Psoas muscle (tissue), 8 donors: ENCODE measurements at regions of chr9 and their contacts with region 1.

Region 1: DNA sequence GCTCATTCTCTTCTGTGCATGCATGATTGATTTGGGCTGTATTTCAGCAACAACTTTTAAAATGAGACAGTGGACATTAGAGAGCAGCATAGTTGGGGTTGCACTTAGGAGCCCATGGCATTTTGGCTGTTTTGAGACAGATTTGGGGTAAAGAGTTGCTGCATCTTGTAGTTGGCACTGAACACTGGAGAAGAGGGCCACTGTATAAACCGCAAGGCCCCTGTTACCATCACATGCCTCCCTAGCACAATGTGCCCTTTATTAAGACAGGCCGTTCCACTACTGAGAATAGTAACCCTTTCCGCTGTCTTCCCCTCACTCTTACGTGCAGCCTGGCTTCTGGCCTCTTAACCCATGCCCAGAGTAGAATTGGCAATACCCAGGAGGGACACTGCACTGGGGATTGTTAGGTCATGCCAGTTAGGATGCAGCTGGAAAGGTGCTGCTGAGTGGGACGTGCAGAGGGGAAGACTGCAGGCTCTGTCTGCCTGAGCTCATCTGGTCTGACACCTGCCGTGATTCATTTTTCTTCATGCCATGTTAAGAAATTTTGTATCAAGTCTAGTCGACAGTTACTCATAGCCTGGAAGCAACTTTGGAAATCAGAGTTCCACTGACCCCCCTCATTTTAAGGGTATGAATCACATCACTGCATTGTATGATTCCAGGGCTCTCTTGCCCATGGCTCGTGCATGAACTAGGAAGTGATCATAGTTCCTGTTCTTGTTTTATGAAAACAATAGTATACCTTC is 146.9 kb upstream of the DMRT1 start:
- DNase-seq: peak; percentile 59 to 87
- ATAC-seq: peak; percentile 79 to 92 (median 88)
- H3K4me3 ChIP-seq: peak overlapping the region; percentile 70
- H3K27ac ChIP-seq: peak overlapping the region; percentile 95
- H3K4me1 ChIP-seq: peaks cover 67% of the 10 kb centered on the region
- H3K27me3 ChIP-seq: no peaks in the 10 kb centered on the region
- CTCF ChIP-seq: no peak

Region 2: GRCh38 chr9:530681-531080 is 163.9 kb before region 1 on chr9:
- intact Hi-C with region 1: no loop called
- DNase-seq: peak in 1 of 2 donors; percentile 65
- ATAC-seq: peak; percentile 83 to 88 (median 85)
- H3K4me3 ChIP-seq: no peak overlapping the region
- H3K27ac ChIP-seq: no peak overlapping the region
- H3K4me1 ChIP-seq: peaks cover 21% of the 10 kb centered on the region
- H3K27me3 ChIP-seq: no peaks in the 10 kb centered on the region
- CTCF ChIP-seq: no peak

Region 3: GRCh38 chr9:715743-716400 is 21.3 kb after region 1 on chr9:
- intact Hi-C with region 1: no loop called
- DNase-seq: no peak
- ATAC-seq: peak; percentile 84 to 90 (median 90)
- H3K4me3 ChIP-seq: peak overlapping the region; percentile 33
- H3K27ac ChIP-seq: peak overlapping the region; percentile 82
- H3K4me1 ChIP-seq: peaks cover 69% of the 10 kb centered on the region
- H3K27me3 ChIP-seq: no peaks in the 10 kb centered on the region
- CTCF ChIP-seq: no peak

Region 4: DNA sequence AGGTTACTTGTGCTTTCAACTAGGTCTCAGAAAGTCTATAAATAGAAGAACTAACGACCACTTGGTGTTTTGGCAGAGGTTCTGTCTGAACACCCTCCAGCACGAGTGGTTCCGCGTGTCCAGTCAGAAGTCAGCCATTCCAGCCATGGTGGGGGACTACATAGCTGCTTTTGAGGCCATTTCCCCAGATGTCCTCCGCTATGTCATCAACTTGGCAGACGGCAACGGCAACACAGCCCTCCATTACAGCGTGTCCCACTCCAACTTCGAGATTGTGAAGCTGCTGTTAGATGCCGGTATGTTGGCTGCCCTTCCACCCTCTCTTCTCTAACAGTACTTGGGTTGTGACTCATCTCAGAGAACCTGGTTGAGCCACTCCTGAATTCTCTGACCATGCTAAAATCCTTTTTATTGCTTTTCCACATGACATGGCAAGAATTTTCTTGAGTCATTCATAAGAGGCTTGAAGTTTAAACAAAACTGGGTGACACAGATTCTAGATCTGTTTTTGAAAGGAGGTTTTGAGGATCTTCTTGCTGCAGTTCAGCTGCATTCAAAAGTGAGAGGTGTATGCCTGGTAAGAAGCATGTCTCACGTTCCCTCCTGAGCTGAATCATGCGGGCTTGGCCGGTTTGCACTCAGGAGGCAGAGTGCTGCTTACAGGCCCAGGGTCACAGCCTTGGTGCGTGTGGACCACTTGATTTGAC is 43.8 kb after region 1 on chr9:
- intact Hi-C with region 1: loop called (anchors 5 kb)
- DNase-seq: peak; percentile 67 to 82
- ATAC-seq: peak; percentile 80 to 91 (median 88)
- H3K4me3 ChIP-seq: peak overlapping the region; percentile 5
- H3K27ac ChIP-seq: peak overlapping the region; percentile 90
- H3K4me1 ChIP-seq: peaks cover 48% of the 10 kb centered on the region
- H3K27me3 ChIP-seq: no peaks in the 10 kb centered on the region
- CTCF ChIP-seq: no peak

Region 5: DNA sequence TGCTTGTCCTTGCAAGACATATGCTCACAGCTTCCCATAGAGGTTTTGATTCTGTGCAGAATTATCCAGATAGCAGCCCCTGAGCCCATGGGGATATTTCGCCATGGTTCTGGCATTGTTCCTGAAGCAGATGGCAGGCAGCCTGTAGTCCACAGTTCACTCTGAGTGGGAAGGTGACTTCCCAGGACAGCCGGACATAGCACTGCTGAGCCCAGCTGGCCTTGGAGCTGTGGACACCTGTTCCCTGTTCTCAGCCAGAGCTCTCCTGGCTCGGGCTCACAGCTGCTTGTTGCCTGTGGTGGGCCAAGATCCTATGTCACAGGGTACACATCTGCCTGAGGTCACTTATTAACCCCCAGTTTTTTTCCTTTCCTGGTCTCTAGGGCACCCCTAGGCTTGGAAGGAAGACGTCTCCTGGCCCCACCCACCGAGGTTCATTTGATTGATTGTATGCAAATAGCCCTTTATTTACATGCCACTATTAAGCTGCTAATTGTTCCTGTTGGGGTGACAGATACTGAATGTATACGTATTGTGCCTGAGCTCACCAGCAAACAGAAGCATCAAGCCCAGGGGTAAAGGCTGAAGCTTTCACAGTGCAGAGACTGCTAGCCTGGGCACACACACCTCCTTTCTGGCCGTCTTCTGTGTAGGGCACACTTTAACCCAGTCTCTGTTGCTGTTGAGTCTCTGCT is 50.4 kb after region 1 on chr9:
- intact Hi-C with region 1: loop called (anchors 5 kb)
- DNase-seq: peak; percentile 83 to 94
- ATAC-seq: peak; percentile 94 to 97 (median 96)
- H3K4me3 ChIP-seq: no peak overlapping the region
- H3K27ac ChIP-seq: peak overlapping the region; percentile 84
- H3K4me1 ChIP-seq: peaks cover 33% of the 10 kb centered on the region
- H3K27me3 ChIP-seq: no peaks in the 10 kb centered on the region
- CTCF ChIP-seq: no peak

Region 6: DNA sequence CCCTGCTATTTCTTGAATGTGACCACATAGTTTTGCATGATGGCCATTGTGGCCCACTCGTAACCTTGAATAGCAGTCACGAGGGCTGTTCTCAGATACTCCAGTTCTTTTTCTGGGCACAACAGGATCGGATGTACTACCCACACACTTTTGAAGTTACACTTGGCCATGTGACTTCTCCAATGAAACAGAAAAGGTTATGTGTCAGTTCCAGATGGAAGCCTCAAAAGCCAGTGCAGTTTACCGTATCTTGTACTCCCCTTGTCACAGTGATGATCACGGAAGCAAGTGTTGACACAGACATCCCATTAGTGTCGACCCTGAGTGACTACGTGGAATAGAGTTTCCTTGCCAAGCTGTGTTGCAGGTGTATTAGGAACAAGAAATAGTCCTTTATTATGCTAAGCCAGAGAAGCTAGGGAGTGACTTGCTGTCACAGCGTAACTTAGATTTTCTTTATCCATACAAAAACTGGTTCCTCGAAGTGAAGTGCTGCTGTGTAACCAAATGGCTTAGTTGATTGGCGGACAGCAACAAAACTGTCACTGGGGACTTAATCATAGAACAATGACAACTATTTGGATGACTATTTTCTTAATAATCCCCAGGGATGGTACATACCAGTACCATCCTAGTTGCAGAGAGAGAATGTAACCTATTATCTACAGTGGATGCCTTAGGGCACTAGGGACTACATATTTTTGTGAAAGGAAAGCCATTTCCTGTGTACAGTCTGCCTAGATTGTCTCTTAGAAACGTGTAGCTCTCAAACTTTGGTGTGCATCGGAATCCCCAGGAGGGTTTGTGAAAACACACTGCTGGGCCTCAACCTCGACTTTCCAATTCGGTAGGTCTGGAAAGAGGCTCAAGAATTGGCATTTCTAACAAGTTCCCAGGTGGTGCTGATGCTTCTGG is 56.8 kb after region 1 on chr9:
- intact Hi-C with region 1: loop called in 1 of 2 experiments (anchors 5 kb)
- DNase-seq: no peak
- ATAC-seq: peak; percentile 48 to 70 (median 61)
- H3K4me3 ChIP-seq: no peak overlapping the region
- H3K27ac ChIP-seq: peak overlapping the region; percentile 85
- H3K4me1 ChIP-seq: peaks cover 43% of the 10 kb centered on the region
- H3K27me3 ChIP-seq: no peaks in the 10 kb centered on the region
- CTCF ChIP-seq: no peak